ENCODE measurements at regions of chr5 and their contacts with region 1.

Region 1: DNA sequence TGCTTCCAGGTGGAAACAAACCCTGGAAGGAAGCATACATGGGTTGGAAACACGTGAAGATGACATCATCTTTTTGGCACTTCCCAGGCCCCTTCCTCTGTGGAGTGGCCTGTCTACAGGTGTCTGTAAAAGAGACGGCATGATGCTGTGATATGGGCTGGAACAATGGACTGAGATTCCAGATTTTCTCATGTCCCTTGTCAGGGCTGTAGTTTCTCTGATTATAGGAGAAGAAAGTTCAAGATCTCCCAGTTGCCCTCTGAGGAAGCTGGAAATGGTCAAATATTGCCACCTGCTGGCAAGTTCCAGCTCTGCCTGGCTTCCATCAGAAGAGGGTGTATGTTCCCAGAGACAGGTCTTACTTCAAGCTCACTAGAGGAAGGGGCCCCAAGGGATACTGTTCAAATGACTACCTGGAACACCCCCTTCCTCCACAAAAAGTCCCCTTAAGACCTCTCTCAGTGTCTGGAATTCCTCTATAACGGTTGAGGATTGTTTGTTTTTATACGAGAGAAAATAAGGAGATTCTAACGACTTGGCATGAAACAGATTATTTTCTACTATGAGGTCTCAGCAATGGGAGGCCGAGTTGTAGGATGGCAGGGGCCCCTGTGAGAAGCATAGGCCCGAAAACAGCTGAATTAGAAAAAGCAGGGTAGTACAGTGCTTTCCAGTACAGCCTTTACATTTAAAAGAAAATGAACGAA is 7.3 kb upstream of the ANXA6 start:
- DNase-seq: peak; percentile 80 to 90 (median 83)
- H3K4me3 ChIP-seq: no peak overlapping the region
- H3K27ac ChIP-seq: no peak overlapping the region
- H3K4me1 ChIP-seq: peaks cover 0 to 3% (median 0%) of the 10 kb centered on the region in 4 experiments
- H3K27me3 ChIP-seq: no peaks in the 10 kb centered on the region

Region 2: GRCh38 chr5:150538007-150538917 is 626.6 kb before region 1 on chr5:
- CTCF ChIA-PET with region 1: no interaction called
- POLR2A ChIA-PET with region 1: no interaction called
- DNase-seq: no peak
- H3K4me3 ChIP-seq: no peak overlapping the region
- H3K27ac ChIP-seq: no peak overlapping the region
- H3K4me1 ChIP-seq: peaks cover 0 to 6% (median 2%) of the 10 kb centered on the region in 4 experiments
- H3K27me3 ChIP-seq: no peaks in the 10 kb centered on the region

Region 3: DNA sequence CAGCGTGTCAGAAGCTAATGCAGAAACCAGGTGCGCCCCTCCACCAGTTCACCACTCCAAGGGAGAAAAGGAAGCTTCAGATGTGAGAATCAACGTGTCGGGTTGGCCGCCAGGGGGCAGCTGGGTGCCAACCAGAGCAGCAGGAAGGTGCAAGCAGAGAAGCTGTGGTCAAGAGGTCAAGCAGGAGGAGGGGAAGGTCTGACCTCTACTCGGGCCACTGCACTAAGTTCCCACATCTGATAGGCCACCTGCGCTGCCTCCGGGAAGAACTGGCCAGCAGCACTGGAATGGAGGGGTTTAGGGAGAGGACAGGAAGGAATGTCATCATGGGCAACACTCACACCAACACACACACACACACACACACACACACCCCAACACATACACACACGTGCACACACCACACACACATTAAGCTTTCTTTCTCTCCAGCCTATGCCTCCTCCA is 38.6 kb before region 1 on chr5:
- CTCF ChIA-PET with region 1: interaction called, 558 read pairs
- POLR2A ChIA-PET with region 1: interaction called, 5 read pairs
- DNase-seq: peak; percentile 50 to 67 (median 58)
- H3K4me3 ChIP-seq: no peak overlapping the region
- H3K27ac ChIP-seq: peak overlapping the region in 1 of 2 experiments; percentile 2
- H3K4me1 ChIP-seq: peaks cover 0 to 21% (median 11%) of the 10 kb centered on the region in 4 experiments
- H3K27me3 ChIP-seq: no peaks in the 10 kb centered on the region

Region 4: DNA sequence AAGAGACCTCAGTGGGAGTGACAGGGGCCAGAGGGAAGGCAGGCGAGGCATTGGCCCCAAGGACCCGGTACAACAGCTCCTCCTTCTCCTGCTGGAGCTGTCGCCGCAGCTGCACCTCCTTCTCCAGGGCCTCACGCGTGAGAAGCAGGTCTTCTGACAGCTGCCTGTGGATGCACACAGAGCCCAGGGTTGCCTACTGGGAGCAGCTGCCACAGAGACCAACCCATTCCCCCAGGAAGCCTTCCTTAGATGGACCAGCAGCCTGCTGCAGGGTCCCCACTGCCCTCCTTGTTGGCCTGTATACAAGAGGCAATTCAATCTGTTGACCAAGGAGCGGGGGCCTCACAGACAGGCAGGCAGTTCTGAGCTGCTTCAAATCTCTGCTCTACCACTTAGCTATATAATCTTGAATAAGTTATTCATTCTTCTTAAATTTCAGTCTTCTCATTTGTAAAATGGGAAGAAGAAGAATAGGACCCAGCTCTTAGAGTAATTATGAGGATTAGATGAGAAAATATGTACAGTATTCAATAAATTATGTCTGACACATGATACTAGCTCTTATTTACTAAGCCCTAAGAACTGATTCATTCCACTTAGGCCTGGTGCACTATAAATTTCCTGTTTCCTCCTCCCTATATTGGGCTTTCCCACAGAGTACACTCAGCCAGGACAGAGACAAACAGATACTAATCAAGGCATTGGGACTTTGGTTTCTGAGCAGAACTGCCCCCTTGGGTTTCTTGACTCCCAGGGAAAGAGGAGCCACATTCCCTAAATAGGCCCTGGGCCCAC is 18.8 kb after region 1 on chr5:
- CTCF ChIA-PET with region 1: interaction called, 13 read pairs
- POLR2A ChIA-PET with region 1: no interaction called
- DNase-seq: no peak
- H3K4me3 ChIP-seq: no peak overlapping the region
- H3K27ac ChIP-seq: no peak overlapping the region
- H3K4me1 ChIP-seq: no peaks in the 10 kb centered on the region
- H3K27me3 ChIP-seq: no peaks in the 10 kb centered on the region

Region 5: DNA sequence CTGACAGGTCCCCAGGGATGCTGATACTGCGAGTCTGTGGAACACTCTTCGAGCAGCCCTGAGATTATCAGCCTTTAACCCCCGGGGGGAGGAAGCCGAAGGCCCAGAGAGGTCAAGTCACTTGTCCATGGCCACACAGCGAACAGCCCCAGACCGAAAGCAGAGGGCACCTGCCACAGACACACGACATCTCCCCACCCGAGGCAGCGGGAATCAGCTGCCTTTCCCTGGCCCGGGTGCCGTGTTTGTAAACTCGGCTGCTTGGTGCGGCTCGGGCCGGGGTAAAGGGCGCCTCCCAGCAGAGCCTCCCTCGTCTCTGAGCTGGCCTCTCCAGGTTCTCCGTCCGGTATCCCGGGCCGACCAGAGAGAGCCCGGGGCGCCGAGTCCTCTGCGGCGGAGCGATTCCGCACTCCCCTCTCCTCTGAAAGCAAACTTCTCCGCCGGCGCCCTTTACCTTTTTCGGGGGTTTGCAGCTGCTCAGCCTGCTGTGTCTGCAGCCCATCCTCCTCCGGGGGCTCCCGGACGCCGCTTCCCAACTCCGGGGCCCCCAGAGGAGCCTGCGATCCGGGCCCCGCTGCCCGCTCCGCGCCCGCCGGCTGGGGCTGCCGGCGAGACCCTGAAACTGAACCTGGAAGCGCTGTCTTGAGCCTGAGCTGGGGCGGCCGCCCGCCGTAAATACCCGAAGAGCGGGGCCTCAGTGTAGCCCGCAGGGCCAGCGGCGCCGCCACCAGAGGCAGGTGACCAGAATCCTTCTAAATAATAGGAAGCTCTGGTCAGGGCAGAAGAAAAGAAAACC is 58.8 kb after region 1 on chr5 and contains the start of gene CCDC69:
- CTCF ChIA-PET with region 1: interaction called, 10 read pairs
- POLR2A ChIA-PET with region 1: no interaction called
- DNase-seq: peak; percentile 63 to 76 (median 63)
- H3K4me3 ChIP-seq: peak within 1 kb of the TSS; percentile 79 to 92 (median 89)
- H3K27ac ChIP-seq: peak within 1 kb of the TSS in 1 of 2 experiments; percentile 78
- H3K4me1 ChIP-seq: peaks cover 9 to 51% (median 39%) of the 10 kb centered on the region in 4 experiments
- H3K27me3 ChIP-seq: no peaks in the 10 kb centered on the region

Region 6: GRCh38 chr5:151239237-151239861 is 74.5 kb after region 1 on chr5:
- CTCF ChIA-PET with region 1: interaction called, 54 read pairs
- POLR2A ChIA-PET with region 1: no interaction called
- DNase-seq: peak in 1 of 3 donors; percentile 31
- H3K4me3 ChIP-seq: no peak overlapping the region
- H3K27ac ChIP-seq: no peak overlapping the region
- H3K4me1 ChIP-seq: peaks cover 3 to 14% (median 12%) of the 10 kb centered on the region in 4 experiments
- H3K27me3 ChIP-seq: no peaks in the 10 kb centered on the region

Region 7: DNA sequence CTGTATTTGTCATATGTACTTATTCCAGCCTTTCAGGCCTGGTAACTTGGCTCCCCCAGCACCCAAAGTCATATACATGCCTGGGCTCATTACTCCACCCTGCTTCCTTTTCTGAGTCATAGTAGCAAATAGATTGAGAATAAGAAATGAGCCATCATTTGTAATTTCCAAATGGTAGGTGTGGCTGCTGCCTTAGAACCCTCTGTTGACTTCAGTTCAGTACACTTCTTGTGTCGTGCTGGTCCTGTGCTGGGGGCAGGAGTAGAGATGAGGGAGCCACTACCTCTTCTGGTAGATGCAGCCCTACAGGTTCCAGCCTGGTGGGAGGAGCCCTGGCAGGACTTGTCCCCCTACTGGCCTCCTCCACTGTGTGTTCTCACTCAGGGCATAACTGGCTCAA is 99.3 kb after region 1 on chr5:
- CTCF ChIA-PET with region 1: no interaction called
- POLR2A ChIA-PET with region 1: no interaction called
- DNase-seq: no peak
- H3K4me3 ChIP-seq: no peak overlapping the region
- H3K27ac ChIP-seq: no peak overlapping the region
- H3K4me1 ChIP-seq: peaks cover 0 to under 1% (median 0%) of the 10 kb centered on the region in 4 experiments
- H3K27me3 ChIP-seq: no peaks in the 10 kb centered on the region